Activated CD8-positive, alpha-beta memory T cell treated with anti-CD3 and anti-CD28 coated beads, Interleukin-2, amount 10 ng/mL, durations not matched to agents 7 days and 5 days (primary cell): ENCODE measurements at regions of chr12 and their contacts with region 1.

Region 1: DNA sequence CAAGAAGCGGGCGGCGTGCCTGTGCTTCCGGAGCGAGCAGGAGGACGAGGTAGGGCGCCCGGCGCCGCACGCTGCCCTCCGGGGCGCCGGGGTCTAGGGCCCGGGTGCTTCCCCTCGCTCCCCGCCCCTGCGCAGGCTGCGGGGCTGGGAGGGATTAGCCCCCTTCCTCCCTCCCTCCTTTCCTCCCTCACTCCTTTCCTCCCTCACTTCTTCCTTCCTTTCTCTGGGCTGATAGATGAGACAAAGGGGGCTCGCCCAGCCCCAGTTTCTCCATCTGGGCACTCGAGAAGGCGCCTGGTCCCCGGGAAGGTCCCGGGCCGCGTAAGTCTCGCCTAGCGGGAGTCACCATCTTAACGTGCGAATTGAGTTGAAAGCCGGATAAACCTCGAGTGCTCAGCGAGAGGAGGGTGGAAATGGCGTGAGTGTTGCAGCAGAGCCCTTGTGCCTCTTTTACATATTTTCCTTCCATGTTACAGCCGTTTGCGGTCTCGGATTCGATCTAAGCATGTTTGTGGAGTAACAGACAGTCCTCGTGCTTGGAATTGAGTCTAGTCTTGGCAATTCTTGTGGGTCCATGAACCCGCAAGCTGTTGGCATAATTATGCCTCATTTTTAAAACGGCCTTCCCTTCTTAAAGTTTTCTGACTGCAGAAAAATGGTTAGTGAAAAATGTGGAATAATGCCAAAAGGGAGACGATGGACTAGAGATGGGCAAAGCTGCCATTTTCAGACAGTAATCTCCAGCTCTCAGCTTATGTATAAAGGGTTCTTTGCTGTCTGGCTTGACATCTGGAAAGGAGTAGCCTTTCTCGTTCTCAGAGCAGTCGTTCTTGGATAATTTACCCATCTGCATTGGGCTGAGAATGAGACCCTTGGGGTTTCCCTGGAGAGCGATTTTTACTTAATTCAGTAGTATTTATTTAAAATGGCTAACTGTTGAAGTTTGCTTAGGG is 924 bp downstream of the NUDT4 start:
- DNase-seq: peak; percentile 77
- ATAC-seq: peak; percentile 56
- H3K4me3 Mint-ChIP-seq: peak overlapping the region; percentile 91
- H3K27ac Mint-ChIP-seq: peak overlapping the region; percentile 99
- H3K4me1 Mint-ChIP-seq: peaks cover 42% of the 10 kb centered on the region
- H3K27me3 Mint-ChIP-seq: peaks cover 3% of the 10 kb centered on the region

Region 2: DNA sequence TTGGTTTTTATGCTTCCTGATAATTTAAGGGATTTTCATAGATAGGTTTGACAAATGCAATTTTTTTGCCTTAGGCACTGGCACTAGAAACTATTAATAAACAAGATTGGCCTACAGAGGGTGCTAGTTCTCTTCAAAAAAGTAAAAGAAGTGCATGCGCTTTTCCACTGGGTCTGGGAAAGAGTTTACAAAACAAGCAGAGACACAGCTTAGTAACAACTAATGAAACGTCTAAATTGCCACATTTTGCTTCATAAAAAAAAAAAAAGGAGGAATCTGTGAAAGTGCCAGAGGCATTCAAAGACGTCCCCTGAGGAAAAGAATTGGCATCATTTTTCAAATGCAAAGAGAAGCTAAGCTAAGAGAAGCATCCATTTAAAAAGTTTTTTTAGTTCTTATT is 391.3 kb before region 1 on chr12:
- CTCF ChIA-PET with region 1: interaction called, 20 read pairs
- DNase-seq: no peak
- ATAC-seq: peak; percentile 51
- H3K4me3 Mint-ChIP-seq: no peak overlapping the region
- H3K27ac Mint-ChIP-seq: peak overlapping the region; percentile 72
- H3K4me1 Mint-ChIP-seq: peaks cover 26% of the 10 kb centered on the region
- H3K27me3 Mint-ChIP-seq: peaks cover 8% of the 10 kb centered on the region

Region 3: GRCh38 chr12:93002293-93003054 is 376.2 kb before region 1 on chr12:
- CTCF ChIA-PET with region 1: no interaction called
- DNase-seq: no peak
- ATAC-seq: no peak
- H3K4me3 Mint-ChIP-seq: no peak overlapping the region
- H3K27ac Mint-ChIP-seq: no peak overlapping the region
- H3K4me1 Mint-ChIP-seq: peaks cover 1% of the 10 kb centered on the region
- H3K27me3 Mint-ChIP-seq: peaks cover 3% of the 10 kb centered on the region

Region 4: GRCh38 chr12:93098077-93098476 is 280.6 kb before region 1 on chr12:
- CTCF ChIA-PET with region 1: interaction called, 19 read pairs
- DNase-seq: peak; percentile 77
- ATAC-seq: peak; percentile 67
- H3K4me3 Mint-ChIP-seq: no peak overlapping the region
- H3K27ac Mint-ChIP-seq: peak overlapping the region; percentile 2
- H3K4me1 Mint-ChIP-seq: peaks cover 16% of the 10 kb centered on the region
- H3K27me3 Mint-ChIP-seq: peaks cover 2% of the 10 kb centered on the region

Region 5: GRCh38 chr12:93390549-93391297 is 12.1 kb after region 1 on chr12:
- CTCF ChIA-PET with region 1: interaction called, 15 read pairs
- DNase-seq: no peak
- ATAC-seq: no peak
- H3K4me3 Mint-ChIP-seq: no peak overlapping the region
- H3K27ac Mint-ChIP-seq: no peak overlapping the region
- H3K4me1 Mint-ChIP-seq: peaks cover 30% of the 10 kb centered on the region
- H3K27me3 Mint-ChIP-seq: no peaks in the 10 kb centered on the region

Region 6: DNA sequence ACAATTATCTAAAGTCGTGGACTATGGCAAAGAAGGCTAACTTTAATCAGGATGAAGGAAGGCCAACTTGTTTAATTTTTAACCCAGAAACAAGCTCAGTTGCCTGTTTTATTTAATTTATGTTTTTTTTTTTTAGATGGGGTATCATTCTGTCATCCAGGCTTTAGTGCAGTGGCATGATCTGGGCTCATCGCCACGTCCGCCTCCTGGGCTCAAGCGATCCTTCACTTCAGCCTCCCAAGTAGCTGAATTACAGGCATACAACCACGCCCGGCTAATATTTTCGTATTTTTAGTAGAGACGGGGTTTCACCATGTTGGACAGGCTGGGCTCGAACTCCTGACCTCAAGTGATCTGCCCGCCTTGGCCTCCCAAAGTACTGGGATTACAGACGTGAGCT is 18.8 kb after region 1 on chr12:
- CTCF ChIA-PET with region 1: interaction called, 15 read pairs
- DNase-seq: no peak
- ATAC-seq: no peak
- H3K4me3 Mint-ChIP-seq: no peak overlapping the region
- H3K27ac Mint-ChIP-seq: no peak overlapping the region
- H3K4me1 Mint-ChIP-seq: peaks cover under 1% of the 10 kb centered on the region
- H3K27me3 Mint-ChIP-seq: no peaks in the 10 kb centered on the region

Region 7: GRCh38 chr12:93407963-93408283 is 29.3 kb after region 1 on chr12:
- CTCF ChIA-PET with region 1: no interaction called
- DNase-seq: no peak
- ATAC-seq: no peak
- H3K4me3 Mint-ChIP-seq: no peak overlapping the region
- H3K27ac Mint-ChIP-seq: peak overlapping the region; percentile 11
- H3K4me1 Mint-ChIP-seq: peaks cover 36% of the 10 kb centered on the region
- H3K27me3 Mint-ChIP-seq: no peaks in the 10 kb centered on the region